ENCODE measurements at regions of chr14 and their contacts with region 1.

Region 1: GRCh38 chr14:103333754-103334643 is at the start of gene EIF5:
- DNase-seq: peak; percentile 100
- total RNA-seq, gene EIF5: 191 to 232 TPM

Region 2: GRCh38 chr14:102966681-102967505 is 367.1 kb before region 1 on chr14:
- intact Hi-C with region 1: no loop called
- DNase-seq: peak; percentile 55

Region 3: GRCh38 chr14:103362780-103363179 is 28.8 kb after region 1 on chr14:
- intact Hi-C with region 1: no loop called
- DNase-seq: no peak

Region 4: GRCh38 chr14:103378038-103378854 is 44.2 kb after region 1 on chr14:
- intact Hi-C with region 1: loop called (anchors 5 to 10 kb)
- DNase-seq: no peak

Region 5: DNA sequence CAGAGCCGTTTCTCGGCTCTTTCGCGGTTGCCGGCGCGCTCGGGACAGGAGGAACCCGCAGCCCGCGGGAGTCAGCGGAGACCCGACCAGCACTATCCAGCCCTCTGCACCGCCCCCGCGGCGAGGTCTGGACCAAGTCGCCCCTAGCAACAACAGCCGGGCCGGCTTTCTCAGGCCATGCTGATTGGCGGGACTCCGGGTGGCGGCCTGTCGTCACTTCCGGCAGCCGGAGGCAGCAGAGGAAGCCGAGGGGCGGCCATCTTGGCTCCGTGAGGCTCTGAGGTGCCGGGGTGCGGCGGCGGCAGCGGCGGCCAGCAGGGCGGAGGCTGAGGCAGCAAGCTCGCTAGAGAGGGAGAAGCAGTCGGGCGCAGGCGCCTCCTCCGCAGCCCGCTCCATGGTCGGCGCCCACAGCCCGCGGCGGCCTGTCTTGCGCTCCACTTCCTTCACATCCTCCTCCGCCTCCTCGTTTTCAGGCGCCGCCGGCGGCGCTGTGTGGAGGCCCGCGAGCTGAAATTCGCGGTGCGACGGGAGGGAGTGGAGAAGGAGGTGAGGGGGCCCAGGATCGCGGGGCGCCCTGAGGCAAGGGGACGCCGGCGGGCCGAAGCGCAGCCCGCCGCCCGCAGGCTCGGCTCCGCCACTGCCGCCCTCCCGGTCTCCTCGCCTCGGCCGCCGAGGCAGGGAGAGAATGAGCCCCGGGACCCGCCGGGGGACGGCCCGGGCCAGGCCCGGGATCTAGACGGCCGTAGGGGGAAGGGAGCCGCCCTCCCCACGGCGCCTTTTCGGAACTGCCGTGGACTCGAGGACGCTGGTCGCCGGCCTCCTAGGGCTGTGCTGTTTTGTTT is 51.4 kb after region 1 on chr14 and contains the start of gene MARK3:
- intact Hi-C with region 1: loop called in 1 of 2 experiments (anchors 10 kb)
- DNase-seq: peak; percentile 100
- total RNA-seq, gene MARK3: 64.3 to 65.7 TPM